ENCODE measurements at regions of chr1 and their contacts with region 1.

Region 1: DNA sequence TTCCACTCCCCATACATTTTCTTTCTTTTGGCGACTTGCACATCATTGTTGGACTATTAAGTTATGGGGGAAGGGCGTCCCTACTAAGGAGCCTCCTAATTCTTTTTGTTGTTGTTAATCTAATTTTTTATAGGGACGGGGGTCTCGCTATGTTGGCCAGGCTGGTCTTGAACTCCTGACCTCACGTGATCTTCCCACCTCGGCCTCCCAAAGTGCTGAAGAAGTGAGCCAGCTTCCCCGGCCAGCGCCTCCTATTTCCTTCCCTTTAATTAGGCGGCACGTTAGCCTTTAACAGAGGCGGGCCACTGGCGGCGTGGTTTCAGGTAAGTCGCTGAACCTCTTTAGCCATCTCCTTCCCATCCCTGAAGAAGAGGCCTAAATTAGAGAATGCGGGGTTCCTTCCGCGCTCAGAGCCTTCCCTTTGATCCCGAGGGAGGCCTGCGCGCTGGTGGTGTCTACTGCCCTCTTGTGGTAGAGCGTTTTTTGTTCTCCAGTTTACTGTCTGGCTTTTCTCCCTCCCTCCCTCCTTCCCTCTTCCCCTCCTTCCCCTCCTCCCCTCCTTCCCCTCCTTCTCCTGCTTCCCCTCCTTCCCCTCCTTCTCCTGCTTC is 38.1 kb downstream of the TNFRSF9 start:
- DNase-seq: peak; percentile 70
- ATAC-seq: peak; percentile 98
- H3K4me3 ChIP-seq: no peak overlapping the region
- H3K27ac ChIP-seq: no peak overlapping the region
- H3K4me1 ChIP-seq: no peaks in the 10 kb centered on the region
- H3K27me3 ChIP-seq: no peaks in the 10 kb centered on the region
- CTCF ChIP-seq: peak; percentile 79
- POLR2A ChIP-seq: no peak
- RAD21 ChIP-seq: peak; percentile 89

Region 2: DNA sequence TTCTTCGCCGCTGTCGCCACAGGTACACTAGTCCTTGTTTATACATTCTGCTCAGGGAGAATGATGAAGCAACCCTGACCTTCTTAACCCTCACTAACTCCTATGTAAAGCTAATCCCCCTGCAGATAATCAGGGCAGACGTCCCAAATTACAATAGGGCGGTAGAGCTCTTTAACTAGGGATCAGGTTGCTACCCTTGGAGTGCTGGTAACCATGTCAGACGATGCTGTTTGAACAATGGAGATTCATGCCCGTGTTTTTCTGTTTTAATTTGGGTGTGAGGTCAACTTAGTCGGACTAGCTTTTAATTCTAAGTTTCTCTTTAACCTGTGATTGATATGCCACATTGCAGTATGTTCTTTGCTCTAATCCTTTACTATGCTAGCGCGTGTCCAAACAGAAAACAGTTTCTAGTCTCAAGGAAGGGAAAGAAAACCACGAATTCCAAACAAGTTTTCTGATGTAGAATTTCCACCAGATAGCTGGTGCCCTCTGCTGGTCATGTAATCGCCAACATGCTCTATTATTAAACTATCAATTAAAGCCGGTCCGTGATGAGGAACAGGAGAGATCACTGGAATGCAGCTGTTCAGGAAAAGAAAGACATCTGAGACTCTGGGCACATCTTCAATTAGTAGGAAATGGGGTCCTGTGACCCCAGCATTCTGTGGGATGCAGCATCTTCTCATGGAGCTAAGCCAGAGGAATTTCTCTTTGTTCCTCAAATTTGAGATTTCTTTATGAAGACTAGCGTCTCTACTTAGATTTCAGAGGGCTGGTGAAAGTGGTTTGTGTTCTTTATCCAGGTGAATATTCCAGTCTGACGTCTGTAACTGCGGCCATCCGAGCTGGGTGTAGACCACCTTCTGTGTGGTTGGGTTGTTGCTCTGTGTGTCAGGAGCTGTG is 149.8 kb before region 1 on chr1:
- CTCF ChIA-PET with region 1: interaction called, 3 read pairs
- POLR2A ChIA-PET with region 1: no interaction called
- dilution Hi-C with region 1: no loop called
- in situ Hi-C with region 1: no loop called
- intact Hi-C with region 1: loop called (anchors 1 kb)
- DNase-seq: peak; percentile 71
- ATAC-seq: peak; percentile 88
- H3K4me3 ChIP-seq: peak overlapping the region; percentile 83
- H3K27ac ChIP-seq: no peak overlapping the region
- H3K4me1 ChIP-seq: peaks cover 6% of the 10 kb centered on the region; the same call in 1 of the 2 replicates
- H3K27me3 ChIP-seq: peaks cover 20% of the 10 kb centered on the region
- CTCF ChIP-seq: peak; percentile 84
- POLR2A ChIP-seq: no peak
- RAD21 ChIP-seq: peak; percentile 80

Region 3: GRCh38 chr1:7783826-7784491 is 118.6 kb before region 1 on chr1 and contains the start of gene PER3:
- CTCF ChIA-PET with region 1: no interaction called
- POLR2A ChIA-PET with region 1: no interaction called
- dilution Hi-C with region 1: no loop called
- in situ Hi-C with region 1: no loop called
- intact Hi-C with region 1: loop called (anchors 5 kb)
- DNase-seq: peak; percentile 95
- ATAC-seq: peak; percentile 97
- H3K4me3 ChIP-seq: peak within 1 kb of the TSS; percentile 53
- H3K27ac ChIP-seq: peak within 1 kb of the TSS; percentile 27
- H3K4me1 ChIP-seq: 0 out of 2 replicates have a peak, but pooled peaks cover 4% of the 10 kb centered on the region
- H3K27me3 ChIP-seq: no peaks in the 10 kb centered on the region
- CTCF ChIP-seq: no peak
- POLR2A ChIP-seq: no peak
- RAD21 ChIP-seq: no peak
- total RNA-seq, gene PER3: 3.4 and 3.6 TPM in 2 replicates

Region 4: DNA sequence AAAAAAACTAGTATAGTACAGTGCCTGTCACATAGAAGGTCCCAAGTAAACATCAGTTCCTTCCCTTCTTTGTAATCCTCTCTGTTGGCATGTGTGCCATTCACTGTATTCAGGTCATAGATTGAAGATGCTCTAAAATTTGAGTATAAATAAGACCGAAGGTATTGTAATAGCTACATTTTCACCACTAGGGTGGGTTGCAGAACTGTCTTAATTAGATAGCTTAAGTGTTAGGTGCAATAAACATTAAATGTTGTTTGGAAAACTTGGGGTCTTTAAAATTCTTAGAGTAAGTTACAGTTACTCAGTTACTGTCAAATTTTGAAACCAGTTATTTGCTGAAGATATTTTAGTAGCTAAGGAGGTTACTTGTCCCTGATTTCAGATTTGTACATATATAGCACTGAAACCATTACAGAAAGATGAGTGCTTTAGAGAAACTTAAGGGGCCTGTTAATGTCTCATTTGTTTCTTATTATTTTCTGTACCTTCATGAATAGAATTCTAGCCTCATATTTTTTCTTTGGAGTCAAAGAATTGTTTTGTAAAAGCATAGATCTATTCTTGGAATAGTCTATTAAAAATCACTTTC is 94.2 kb before region 1 on chr1:
- CTCF ChIA-PET with region 1: no interaction called
- POLR2A ChIA-PET with region 1: no interaction called
- dilution Hi-C with region 1: no loop called
- in situ Hi-C with region 1: no loop called
- intact Hi-C with region 1: loop called (anchors 2 kb)
- DNase-seq: peak; percentile 40
- ATAC-seq: peak; percentile 56; the same call in 1 of the 2 replicates
- H3K4me3 ChIP-seq: no peak overlapping the region
- H3K27ac ChIP-seq: no peak overlapping the region
- H3K4me1 ChIP-seq: peaks cover 2% of the 10 kb centered on the region; the same call in 1 of the 2 replicates
- H3K27me3 ChIP-seq: no peaks in the 10 kb centered on the region
- CTCF ChIP-seq: peak; percentile 56
- POLR2A ChIP-seq: no peak
- RAD21 ChIP-seq: peak; percentile 46

Measured in IMR-90 (cell line).